ENCODE measurements at regions of chr12 and their contacts with region 1.

Region 1: GRCh38 chr12:92987362-92987761 is 58.3 kb upstream of the EEA1 start:
- DNase-seq: peak in 1 of 3 donors; percentile 64
- ATAC-seq: peak; percentile 87
- H3K4me3 ChIP-seq: no peak overlapping the region
- H3K4me1 ChIP-seq: no peaks in the 10 kb centered on the region
- CTCF ChIP-seq: no peak

Region 2: DNA sequence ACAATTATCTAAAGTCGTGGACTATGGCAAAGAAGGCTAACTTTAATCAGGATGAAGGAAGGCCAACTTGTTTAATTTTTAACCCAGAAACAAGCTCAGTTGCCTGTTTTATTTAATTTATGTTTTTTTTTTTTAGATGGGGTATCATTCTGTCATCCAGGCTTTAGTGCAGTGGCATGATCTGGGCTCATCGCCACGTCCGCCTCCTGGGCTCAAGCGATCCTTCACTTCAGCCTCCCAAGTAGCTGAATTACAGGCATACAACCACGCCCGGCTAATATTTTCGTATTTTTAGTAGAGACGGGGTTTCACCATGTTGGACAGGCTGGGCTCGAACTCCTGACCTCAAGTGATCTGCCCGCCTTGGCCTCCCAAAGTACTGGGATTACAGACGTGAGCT is 410.1 kb after region 1 on chr12:
- intact Hi-C with region 1: loop called in 1 of 2 experiments (anchors 5 kb)
- DNase-seq: no peak
- ATAC-seq: no peak
- H3K4me3 ChIP-seq: no peak overlapping the region
- H3K4me1 ChIP-seq: peaks cover 11% of the 10 kb centered on the region
- CTCF ChIP-seq: no peak

Region 3: DNA sequence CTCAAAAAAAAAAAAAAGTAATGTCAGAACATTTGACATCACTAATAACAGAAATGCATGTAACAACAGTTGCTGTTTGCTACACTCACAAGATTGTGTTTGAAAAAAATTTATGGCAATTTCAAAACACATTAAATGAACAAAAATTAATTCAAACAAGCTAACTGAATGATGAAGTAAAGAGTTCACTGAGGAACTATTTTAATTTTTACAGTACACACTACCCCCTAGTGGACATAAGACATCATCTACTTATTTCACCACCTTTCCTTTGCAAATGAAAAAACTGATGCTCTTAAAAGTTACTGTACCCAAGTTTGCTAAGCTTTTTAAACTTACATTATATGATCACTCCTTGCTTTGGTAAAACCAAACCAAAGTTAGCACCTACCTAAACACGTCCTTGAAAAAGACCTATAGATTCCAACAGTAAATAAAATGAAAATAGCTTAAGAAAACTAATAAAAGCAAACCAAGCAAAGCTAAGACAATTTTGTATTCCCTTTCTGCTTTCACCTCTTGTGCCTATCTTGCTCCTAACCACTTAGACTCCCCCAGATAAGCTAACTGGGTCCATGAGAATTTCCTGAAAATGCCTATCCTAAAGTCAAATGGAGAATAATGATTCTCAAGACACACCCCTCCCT is 432.1 kb after region 1 on chr12:
- intact Hi-C with region 1: loop called in 1 of 2 experiments (anchors 10 kb)
- DNase-seq: no peak
- ATAC-seq: peak; percentile 84
- H3K4me3 ChIP-seq: no peak overlapping the region
- H3K4me1 ChIP-seq: no peaks in the 10 kb centered on the region
- CTCF ChIP-seq: peak; percentile 30